Cardiac septum (tissue), 1 donor: ENCODE measurements at regions of chr2 and their contacts with region 1.

Region 1: GRCh38 chr2:163345908-163346573 is 389.8 kb downstream of the FIGN start:
- DNase-seq: no peak

Region 2: GRCh38 chr2:163465440-163465839 is 119.4 kb after region 1 on chr2:
- intact Hi-C with region 1: loop called (anchors 5 kb)
- DNase-seq: no peak

Region 3: DNA sequence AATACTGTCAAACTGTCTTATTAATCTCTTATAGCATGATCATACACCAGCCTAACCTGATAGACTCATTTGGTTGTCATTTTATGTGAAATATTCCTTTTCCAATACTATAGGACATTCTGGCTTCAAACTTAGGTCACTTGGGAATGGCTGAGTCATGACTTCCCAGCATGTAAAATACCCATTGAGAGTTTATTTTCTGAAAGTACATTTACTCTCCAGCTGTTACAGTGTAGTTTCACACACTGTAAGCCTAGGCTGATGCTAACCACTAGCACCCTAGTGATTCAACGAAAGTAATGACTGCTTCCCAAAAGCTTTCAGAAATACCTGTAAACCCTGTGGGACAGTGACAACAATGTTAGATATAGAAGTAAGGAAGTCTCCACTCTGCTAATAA is 295.9 kb after region 1 on chr2:
- intact Hi-C with region 1: loop called (anchors 10 kb)
- DNase-seq: no peak

Region 4: GRCh38 chr2:163771601-163772000 is 425.6 kb after region 1 on chr2:
- intact Hi-C with region 1: no loop called
- DNase-seq: no peak

Region 5: DNA sequence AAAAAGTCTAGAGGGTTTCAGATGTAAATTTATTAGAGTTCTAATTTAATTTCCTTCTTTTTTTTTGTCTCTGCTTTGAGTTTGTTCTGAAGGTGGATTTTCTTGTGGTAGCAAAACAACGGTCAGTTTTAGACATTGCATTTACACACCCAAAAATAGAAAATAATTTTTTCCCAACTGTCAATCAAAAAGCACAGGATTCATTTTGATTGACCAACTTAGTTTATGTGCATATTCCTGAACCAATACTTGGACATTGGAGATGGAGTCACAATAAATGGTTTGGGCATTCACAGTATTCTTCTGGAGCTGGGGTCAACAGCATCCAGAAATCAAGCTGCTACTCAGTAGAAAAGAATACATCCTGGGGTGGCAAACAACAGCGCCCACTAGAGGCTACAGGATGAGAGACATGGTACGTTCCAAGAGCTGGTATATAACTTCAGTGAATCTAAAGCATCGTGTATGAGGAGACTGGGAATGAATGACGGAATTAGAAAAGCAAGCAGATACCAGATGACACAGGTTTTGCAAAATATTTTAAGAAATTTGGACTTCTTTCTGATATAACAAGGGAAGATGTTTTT is 532.6 kb after region 1 on chr2:
- intact Hi-C with region 1: loop called (anchors 5 kb)
- DNase-seq: no peak

Region 6: GRCh38 chr2:164430166-164430783 is 1084.2 kb after region 1 on chr2:
- intact Hi-C with region 1: loop called (anchors 5 kb)
- DNase-seq: no peak